ENCODE measurements at regions of chr12 and their contacts with region 1.

Region 1: GRCh38 chr12:80721326-80721725 is 4.6 kb downstream of the MYF5 start:
- DNase-seq: no peak
- ATAC-seq: no peak
- H3K4me3 ChIP-seq: no peak overlapping the region
- H3K4me3 Mint-ChIP-seq: no peak overlapping the region
- H3K27ac ChIP-seq: no peak overlapping the region
- H3K27ac Mint-ChIP-seq: no peak overlapping the region
- H3K4me1 ChIP-seq: no peaks in the 10 kb centered on the region
- H3K4me1 Mint-ChIP-seq: no peaks in the 10 kb centered on the region
- H3K27me3 ChIP-seq: peaks cover 0 to 3% of the 10 kb centered on the region in 2 experiments
- H3K27me3 Mint-ChIP-seq: peaks cover 2% of the 10 kb centered on the region
- CTCF ChIP-seq: no peak

Region 2: GRCh38 chr12:81128930-81129554 is 407.7 kb after region 1 on chr12:
- CTCF ChIA-PET with region 1: no interaction called
- POLR2A ChIA-PET with region 1: no interaction called
- intact Hi-C with region 1: no loop called
- DNase-seq: no peak
- ATAC-seq: no peak
- H3K4me3 ChIP-seq: no peak overlapping the region
- H3K4me3 Mint-ChIP-seq: no peak overlapping the region
- H3K27ac ChIP-seq: no peak overlapping the region
- H3K27ac Mint-ChIP-seq: no peak overlapping the region
- H3K4me1 ChIP-seq: no peaks in the 10 kb centered on the region
- H3K4me1 Mint-ChIP-seq: no peaks in the 10 kb centered on the region
- H3K27me3 ChIP-seq: no peaks in the 10 kb centered on the region
- H3K27me3 Mint-ChIP-seq: no peaks in the 10 kb centered on the region
- CTCF ChIP-seq: peak; percentile 15

Region 3: GRCh38 chr12:81212996-81213696 is 491.8 kb after region 1 on chr12:
- CTCF ChIA-PET with region 1: no interaction called
- POLR2A ChIA-PET with region 1: no interaction called
- intact Hi-C with region 1: loop called in 1 of 2 experiments (anchors 5 kb)
- DNase-seq: no peak
- ATAC-seq: no peak
- H3K4me3 ChIP-seq: no peak overlapping the region
- H3K4me3 Mint-ChIP-seq: no peak overlapping the region
- H3K27ac ChIP-seq: no peak overlapping the region
- H3K27ac Mint-ChIP-seq: no peak overlapping the region
- H3K4me1 ChIP-seq: no peaks in the 10 kb centered on the region
- H3K4me1 Mint-ChIP-seq: no peaks in the 10 kb centered on the region
- H3K27me3 ChIP-seq: no peaks in the 10 kb centered on the region
- H3K27me3 Mint-ChIP-seq: no peaks in the 10 kb centered on the region
- CTCF ChIP-seq: no peak

Measured in CD8-positive, alpha-beta T cell (primary cell).